ENCODE measurements at regions of chr22 and their contacts with region 1.

Region 1: DNA sequence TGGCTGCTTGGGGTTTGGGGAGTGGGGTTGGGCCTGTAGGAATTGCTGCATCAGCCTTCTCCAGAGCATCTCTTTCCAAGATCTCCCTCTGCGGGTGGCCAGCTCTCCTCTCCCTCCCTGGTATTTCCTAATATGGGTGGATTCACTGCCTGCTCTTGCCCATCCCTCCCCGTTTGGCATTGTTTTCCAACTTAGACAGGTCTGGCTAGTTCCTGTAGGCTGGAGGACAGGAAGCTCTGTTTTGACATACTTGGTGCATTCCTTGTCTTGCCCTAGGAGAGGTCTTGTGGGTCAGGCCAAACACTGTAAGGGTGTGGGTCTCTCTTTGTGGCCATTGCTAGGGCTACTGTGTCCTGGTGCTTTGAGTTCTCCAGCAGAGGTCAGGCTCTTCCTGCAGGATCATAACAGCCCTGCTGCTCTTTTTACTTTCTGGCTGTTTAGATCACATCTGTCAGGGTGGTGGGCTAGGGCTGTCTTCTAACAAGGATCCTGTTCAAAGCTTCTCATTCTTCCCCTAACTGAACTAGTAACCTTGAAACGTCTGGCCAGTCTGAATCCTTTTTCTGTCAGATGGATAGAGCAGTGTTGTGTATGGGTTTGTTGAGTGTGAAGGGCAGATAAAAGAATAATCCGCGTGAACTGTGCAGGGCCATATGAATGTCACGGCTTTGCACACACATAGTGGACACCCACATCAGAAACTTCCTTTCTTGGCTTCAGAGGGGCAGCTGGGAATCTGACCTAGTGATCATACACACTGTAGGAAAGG is 18.3 kb upstream of the MICALL1 start:
- DNase-seq: peak; percentile 47
- H3K4me3 ChIP-seq: no peak overlapping the region
- H3K27ac ChIP-seq: peak overlapping the region; percentile 69
- H3K27me3 ChIP-seq: no peaks in the 10 kb centered on the region
- CTCF ChIP-seq: peak; percentile 79

Region 2: DNA sequence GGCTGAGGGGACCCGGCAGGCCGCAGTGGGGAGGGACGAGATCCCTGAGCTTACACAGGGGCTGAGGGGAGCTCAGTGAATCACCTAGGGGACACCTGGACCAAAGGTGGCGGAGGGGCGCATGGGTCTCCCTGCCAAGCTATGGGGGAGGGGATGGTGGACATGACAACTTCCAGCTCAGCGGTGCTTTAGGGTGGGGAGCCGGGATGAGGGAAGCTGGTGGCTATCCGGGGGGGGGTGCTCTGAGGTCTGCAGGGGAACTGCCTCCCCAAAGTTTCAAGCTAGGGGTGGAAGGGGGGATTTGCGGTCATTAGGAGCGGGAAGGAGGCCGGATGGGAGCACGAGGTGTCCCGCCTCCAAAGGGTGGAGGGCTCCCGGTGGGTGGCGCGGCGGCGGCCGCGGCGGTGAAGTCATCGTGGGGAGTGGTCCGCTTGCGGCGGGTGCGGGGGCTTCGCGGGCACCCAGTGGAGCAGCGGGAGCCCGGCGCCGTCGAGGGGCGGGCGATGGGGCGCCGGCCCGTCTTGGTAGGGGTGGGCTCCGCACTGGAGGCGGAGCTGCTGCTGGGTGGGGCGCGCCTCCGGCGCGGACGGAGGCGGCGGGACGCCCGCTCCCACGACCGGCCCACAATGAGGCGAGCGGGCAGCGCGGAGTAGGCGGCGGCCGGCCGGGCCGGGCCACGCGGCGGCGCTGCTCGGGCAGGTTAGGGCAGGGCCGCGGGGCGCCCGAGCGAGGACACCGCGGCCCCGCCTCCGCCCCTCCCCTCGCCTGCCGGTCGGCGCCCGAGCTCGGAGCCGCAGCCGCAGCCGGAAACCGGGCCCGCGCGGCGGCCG is 18.0 kb after region 1 on chr22 and contains the start of gene MICALL1:
- CTCF ChIA-PET with region 1: interaction called, 25 read pairs
- POLR2A ChIA-PET with region 1: interaction called, 13 read pairs
- DNase-seq: no peak
- H3K4me3 ChIP-seq: peak within 1 kb of the TSS; percentile 73
- H3K27ac ChIP-seq: peak within 1 kb of the TSS; percentile 100
- H3K27me3 ChIP-seq: no peaks in the 10 kb centered on the region
- CTCF ChIP-seq: no peak
- polyA plus RNA-seq, gene MICALL1: 12.1 and 12.9 TPM in 2 replicates

Region 3: DNA sequence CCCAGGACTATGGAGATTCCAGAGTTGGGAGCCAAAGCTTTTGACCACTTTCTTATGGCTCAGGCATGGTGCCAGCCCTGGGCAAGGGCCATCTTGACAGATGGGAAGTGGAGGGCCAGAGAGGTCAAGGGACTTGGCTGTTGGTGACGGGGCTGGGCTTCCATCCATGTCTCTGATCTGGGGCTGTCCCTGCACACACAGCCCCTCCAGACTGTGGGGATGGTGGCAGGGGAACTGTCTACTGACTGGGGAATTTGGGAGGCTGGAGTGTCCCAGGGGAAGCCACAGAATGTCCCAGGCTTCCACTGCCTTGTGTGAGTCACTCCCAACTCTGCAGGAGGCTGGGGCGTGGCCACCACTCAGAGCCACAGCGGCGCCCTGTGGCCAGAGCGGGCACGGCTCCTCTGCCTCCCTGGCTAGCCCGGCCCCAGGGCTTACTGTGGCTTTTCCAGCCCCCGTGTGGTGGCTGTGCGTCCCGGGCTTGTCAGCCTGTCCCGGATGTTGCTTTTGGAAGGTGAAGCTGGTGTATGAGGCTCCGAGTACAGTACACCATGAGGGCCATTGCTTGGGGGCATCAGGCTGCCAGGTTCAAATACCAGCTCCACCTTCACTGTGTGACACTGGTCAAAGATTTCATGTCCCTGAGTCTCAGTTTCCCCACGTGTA is 46.0 kb after region 1 on chr22:
- CTCF ChIA-PET with region 1: interaction called, 24 read pairs
- POLR2A ChIA-PET with region 1: interaction called, 3 read pairs
- DNase-seq: peak; percentile 55
- H3K4me3 ChIP-seq: no peak overlapping the region
- H3K27ac ChIP-seq: peak overlapping the region; percentile 57
- H3K27me3 ChIP-seq: no peaks in the 10 kb centered on the region
- CTCF ChIP-seq: peak; percentile 98

Region 4: GRCh38 chr22:37965940-37966664 is 78.3 kb after region 1 on chr22:
- CTCF ChIA-PET with region 1: interaction called, 44 read pairs
- POLR2A ChIA-PET with region 1: no interaction called
- DNase-seq: no peak
- H3K4me3 ChIP-seq: no peak overlapping the region
- H3K27ac ChIP-seq: no peak overlapping the region
- H3K27me3 ChIP-seq: no peaks in the 10 kb centered on the region
- CTCF ChIP-seq: no peak

Region 5: DNA sequence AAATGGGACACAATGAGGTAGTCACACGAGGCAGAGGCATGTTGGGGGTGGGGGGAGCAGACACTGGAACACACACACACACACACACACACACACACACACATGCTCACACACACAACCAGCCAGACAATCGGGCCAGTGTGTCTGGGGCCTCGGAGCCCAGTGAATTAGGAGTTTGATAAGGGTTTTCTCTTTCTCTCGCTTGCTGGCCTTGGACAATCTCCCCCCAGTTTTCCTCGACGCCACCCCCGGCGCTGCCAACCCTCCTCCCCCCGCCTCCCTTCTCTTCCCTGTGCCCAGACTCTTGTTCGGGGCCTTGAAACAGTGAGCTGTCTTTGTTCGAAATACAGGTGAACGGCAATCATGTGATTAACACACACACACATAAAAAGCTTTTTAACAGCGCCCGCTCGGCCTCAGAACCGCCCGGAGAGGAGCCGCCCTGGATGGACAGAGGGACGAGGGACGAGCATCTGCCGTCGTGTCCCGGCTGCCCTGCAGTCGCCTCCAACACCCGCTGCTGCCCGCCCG is 98.0 kb after region 1 on chr22:
- CTCF ChIA-PET with region 1: no interaction called
- POLR2A ChIA-PET with region 1: no interaction called
- DNase-seq: no peak
- H3K4me3 ChIP-seq: no peak overlapping the region
- H3K27ac ChIP-seq: no peak overlapping the region
- H3K27me3 ChIP-seq: peaks cover 4% of the 10 kb centered on the region
- CTCF ChIP-seq: no peak

Measured in AG04450 (cell line).